Lower leg skin (tissue), 4 donors: ENCODE measurements at regions of chr6 and their contacts with region 1.

Region 1: DNA sequence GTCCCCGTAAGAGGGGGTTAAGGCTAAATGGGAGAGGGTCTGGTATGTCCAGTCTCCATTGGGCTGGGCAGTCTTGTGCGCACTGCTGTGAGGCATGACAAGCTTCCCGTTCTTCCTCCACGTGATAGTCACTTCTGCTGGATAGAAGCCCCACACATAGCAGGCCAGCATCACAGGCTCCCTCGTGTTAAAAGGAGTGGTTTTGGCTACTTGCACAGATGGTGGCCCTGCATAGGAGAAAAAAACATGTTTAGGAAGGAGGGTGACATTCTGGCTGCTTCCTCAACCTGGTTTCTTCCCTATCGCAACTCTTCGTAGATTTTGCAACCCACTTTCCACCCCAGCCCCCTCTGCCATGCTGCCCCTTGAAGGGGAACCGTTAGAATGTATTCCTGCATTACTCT is 3.6 kb downstream of the HLA-DMB start:
- DNase-seq: no peak
- H3K4me3 ChIP-seq: no peak overlapping the region
- CTCF ChIP-seq: no peak
- POLR2A ChIP-seq: no peak

Region 2: GRCh38 chr6:32974541-32975308 is 37.5 kb after region 1 on chr6:
- intact Hi-C with region 1: loop called (anchors 5 kb)
- DNase-seq: no peak
- H3K4me3 ChIP-seq: peak overlapping the region; percentile 95
- CTCF ChIP-seq: no peak
- POLR2A ChIP-seq: no peak